Heart left ventricle (tissue), 16 donors: ENCODE measurements at regions of chr1 and their contacts with region 1.

Region 1: GRCh38 chr1:16032388-16033103 is 10.7 kb downstream of the CLCNKA start:
- DNase-seq: peak; percentile 87 to 93 (median 90)
- ATAC-seq: peak; percentile 81 to 96 (median 93)
- H3K4me3 ChIP-seq: no peak overlapping the region
- H3K27ac ChIP-seq: no peak overlapping the region
- H3K4me1 ChIP-seq: peaks cover 0 to 11% (median 4%) of the 10 kb centered on the region in 12 donors
- H3K27me3 ChIP-seq: peaks cover 0 to 6% (median 0%) of the 10 kb centered on the region in 9 donors
- CTCF ChIP-seq: peak; percentile 90 to 99 (median 96)
- POLR2A ChIP-seq: no peak

Region 2: GRCh38 chr1:16009030-16009709 is 23.4 kb before region 1 on chr1:
- intact Hi-C with region 1: loop called in 8 of 10 experiments (anchors 1 to 2 kb)
- DNase-seq: peak; percentile 76 to 88 (median 79)
- ATAC-seq: peak in 2 of 4 donors; percentile 3 to 19
- H3K4me3 ChIP-seq: no peak overlapping the region
- H3K27ac ChIP-seq: no peak overlapping the region
- H3K4me1 ChIP-seq: peaks cover 0 to 23% (median 15%) of the 10 kb centered on the region in 12 donors
- H3K27me3 ChIP-seq: peaks cover 0 to 5% (median 0%) of the 10 kb centered on the region in 9 donors
- CTCF ChIP-seq: peak; percentile 94 to 99 (median 97)
- POLR2A ChIP-seq: no peak

Region 3: DNA sequence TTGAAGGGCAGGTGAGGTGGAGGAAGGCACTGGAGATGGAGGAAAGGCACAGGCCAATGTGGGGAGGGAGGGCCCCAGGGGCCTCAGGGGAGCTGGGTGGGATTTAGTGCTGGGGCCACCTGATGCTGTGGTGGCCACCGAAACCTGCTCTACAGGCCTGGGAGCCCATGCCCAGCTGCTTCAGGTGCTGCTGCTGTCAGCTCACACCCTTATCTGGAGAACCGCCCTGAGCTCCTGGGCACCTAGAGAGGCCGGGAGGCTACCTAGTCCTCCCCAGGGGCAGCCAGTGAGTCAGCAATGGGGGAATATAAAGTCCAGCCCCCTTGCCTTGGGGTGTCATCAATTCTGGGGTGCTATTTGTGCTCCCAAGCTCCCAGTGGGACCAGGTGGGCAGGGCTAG is 28.7 kb after region 1 on chr1:
- intact Hi-C with region 1: loop called in 4 of 10 experiments (anchors 1 to 2 kb)
- DNase-seq: no peak
- ATAC-seq: no peak
- H3K4me3 ChIP-seq: no peak overlapping the region
- H3K27ac ChIP-seq: no peak overlapping the region
- H3K4me1 ChIP-seq: peaks cover 0 to 12% (median 0%) of the 10 kb centered on the region in 12 donors
- H3K27me3 ChIP-seq: no peaks in the 10 kb centered on the region
- CTCF ChIP-seq: no peak
- POLR2A ChIP-seq: no peak

Region 4: GRCh38 chr1:16078925-16079656 is 46.5 kb after region 1 on chr1:
- intact Hi-C with region 1: no loop called
- DNase-seq: peak; percentile 69 to 83 (median 76)
- ATAC-seq: peak; percentile 37 to 71 (median 58)
- H3K4me3 ChIP-seq: peak overlapping the region in 1 of 12 donors; percentile 34
- H3K27ac ChIP-seq: peak overlapping the region in 3 of 12 donors; percentile 18 to 50 (median 46)
- H3K4me1 ChIP-seq: peaks cover 0 to 50% (median 18%) of the 10 kb centered on the region in 12 donors
- H3K27me3 ChIP-seq: peaks cover 0 to 4% (median 0%) of the 10 kb centered on the region in 9 donors
- CTCF ChIP-seq: peak; percentile 73 to 95 (median 88)
- POLR2A ChIP-seq: no peak